Activated naive CD4-positive, alpha-beta T cell treated with anti-CD3 and anti-CD28 coated beads for 36 hours (primary cell): ENCODE measurements at regions of chr1 and their contacts with region 1.

Region 1: GRCh38 chr1:109984456-109985275 is at the start of gene AHCYL1:
- DNase-seq: peak; percentile 100
- H3K4me3 Mint-ChIP-seq: peak within 1 kb of the TSS; percentile 97
- H3K27ac Mint-ChIP-seq: peak within 1 kb of the TSS; percentile 92
- H3K4me1 Mint-ChIP-seq: peaks cover 28% of the 10 kb centered on the region
- H3K27me3 Mint-ChIP-seq: no peaks in the 10 kb centered on the region
- total RNA-seq, gene AHCYL1: 70.0 to 75.1 TPM

Region 2: GRCh38 chr1:109643385-109644230 is 341.1 kb before region 1 on chr1:
- CTCF ChIA-PET with region 1: interaction called, 68 read pairs
- intact Hi-C with region 1: loop called (anchors 1 kb)
- DNase-seq: peak; percentile 94
- H3K4me3 Mint-ChIP-seq: no peak overlapping the region
- H3K27ac Mint-ChIP-seq: no peak overlapping the region
- H3K4me1 Mint-ChIP-seq: peaks cover 5% of the 10 kb centered on the region
- H3K27me3 Mint-ChIP-seq: no peaks in the 10 kb centered on the region

Region 3: GRCh38 chr1:109790735-109791494 is 193.8 kb before region 1 on chr1:
- CTCF ChIA-PET with region 1: interaction called, 622 read pairs
- intact Hi-C with region 1: loop called (anchors 5 kb)
- DNase-seq: peak; percentile 91
- H3K4me3 Mint-ChIP-seq: no peak overlapping the region
- H3K27ac Mint-ChIP-seq: peak overlapping the region; percentile 81
- H3K4me1 Mint-ChIP-seq: peaks cover 57% of the 10 kb centered on the region
- H3K27me3 Mint-ChIP-seq: no peaks in the 10 kb centered on the region

Region 4: DNA sequence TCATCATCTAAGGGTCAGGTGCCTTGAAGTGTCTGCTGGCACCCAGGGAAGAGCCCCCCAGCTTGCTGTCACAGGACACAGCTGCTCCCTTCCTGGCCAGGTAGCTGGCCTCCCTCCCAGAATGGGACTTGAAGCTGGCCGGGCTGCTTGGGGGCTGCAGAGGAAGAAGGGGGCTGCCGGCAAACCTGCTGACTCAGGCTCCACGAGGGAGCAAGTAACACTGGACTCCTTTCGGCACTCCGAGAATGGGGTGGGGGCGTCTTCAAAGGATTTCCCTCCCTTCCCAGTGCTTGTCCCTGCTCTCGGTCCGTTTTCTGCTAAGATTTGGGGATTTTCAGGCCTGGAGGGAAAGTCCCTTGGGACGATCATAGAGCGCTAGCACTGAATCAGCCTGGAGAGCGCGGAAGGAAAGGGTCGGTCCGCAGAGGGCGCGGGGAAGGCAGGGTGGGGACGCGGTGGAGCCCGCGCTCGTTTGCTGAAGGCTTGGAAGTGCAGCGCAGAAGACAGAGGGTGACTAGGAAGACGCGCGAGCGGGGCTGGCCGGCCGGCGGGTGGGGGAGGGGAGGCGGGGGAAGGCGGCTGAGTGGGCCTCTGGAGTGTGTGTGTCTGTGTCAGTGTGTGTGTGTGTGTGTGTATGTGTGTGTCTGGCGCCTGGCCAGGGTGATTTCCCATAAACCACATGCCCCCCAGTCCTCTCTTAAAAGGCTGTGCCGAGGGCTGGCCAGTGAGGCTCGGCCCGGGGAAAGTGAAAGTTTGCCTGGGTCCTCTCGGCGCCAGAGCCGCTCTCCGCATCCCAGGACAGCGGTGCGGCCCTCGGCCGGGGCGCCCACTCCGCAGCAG is 74.3 kb before region 1 on chr1 and contains the start of gene CSF1:
- CTCF ChIA-PET with region 1: interaction called, 13 read pairs
- intact Hi-C with region 1: loop called (anchors 2 kb)
- DNase-seq: peak; percentile 69
- H3K4me3 Mint-ChIP-seq: peak within 1 kb of the TSS; percentile 82
- H3K27ac Mint-ChIP-seq: peak within 1 kb of the TSS; percentile 81
- H3K4me1 Mint-ChIP-seq: peaks cover 53% of the 10 kb centered on the region
- H3K27me3 Mint-ChIP-seq: no peaks in the 10 kb centered on the region
- total RNA-seq, gene CSF1: 12.0 to 13.5 TPM

Region 5: DNA sequence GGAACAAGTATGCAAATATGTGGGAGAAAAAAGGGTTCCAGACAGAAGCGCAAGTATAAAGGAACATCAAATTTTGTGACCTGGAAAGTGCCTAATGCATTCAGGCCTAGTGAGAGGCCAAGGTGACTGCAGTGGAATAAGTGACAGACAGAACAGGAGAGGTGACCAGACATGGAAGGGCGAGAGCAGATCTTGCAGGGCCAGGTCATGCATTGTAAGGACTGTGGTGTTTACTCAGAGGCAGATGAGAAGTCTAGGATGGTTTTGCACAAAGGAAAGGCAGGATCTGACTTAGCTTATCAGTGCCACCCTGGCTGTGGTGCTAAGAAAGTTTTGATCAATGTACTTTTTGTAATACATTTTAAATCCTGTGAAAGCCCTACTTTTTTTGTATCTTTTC is 34.2 kb before region 1 on chr1:
- CTCF ChIA-PET with region 1: no interaction called
- intact Hi-C with region 1: no loop called
- DNase-seq: no peak
- H3K4me3 Mint-ChIP-seq: no peak overlapping the region
- H3K27ac Mint-ChIP-seq: no peak overlapping the region
- H3K4me1 Mint-ChIP-seq: peaks cover 4% of the 10 kb centered on the region
- H3K27me3 Mint-ChIP-seq: no peaks in the 10 kb centered on the region

Region 6: DNA sequence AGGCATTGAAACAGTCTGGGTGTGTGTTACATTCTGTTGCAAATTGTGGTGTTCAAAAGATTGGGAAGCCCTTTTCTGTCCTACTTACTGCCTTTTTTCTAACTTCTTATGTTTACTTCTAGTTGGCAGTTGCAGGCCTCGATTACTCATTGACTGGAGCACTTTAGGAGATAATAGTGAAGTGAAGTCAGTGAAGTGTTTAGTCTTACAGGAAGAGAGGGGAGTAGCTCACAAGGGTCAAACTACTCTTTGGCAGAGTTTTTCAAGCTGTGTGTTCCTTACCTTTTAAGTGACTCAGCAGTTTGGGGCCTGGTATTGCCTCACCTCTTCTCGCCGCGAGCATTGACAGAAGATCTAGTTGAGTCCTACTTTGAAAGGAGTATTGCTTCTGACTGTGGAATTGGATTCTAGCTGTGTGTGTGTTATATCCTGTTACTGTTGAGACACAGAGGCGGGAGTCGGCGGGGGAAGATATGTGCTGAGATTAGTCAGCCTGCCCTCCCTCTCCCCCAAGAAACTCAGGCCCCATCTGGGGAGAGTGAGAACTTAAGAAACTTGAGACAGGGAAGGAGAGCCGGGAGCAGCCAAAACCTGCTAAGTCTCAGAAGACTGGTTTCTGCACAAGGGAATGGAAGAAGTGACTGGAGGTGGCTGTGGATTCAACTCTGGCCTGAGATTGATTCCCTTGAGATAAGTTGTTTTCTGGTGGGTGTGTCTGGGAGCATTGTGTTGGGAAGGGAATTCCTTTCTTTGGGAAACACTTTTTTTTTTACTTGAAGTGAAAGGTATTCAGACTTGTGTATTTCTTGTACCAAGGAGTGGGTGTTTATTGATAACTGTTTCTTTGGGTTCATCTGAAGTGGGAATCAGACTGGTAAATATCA is 19.3 kb after region 1 on chr1:
- CTCF ChIA-PET with region 1: interaction called, 15 read pairs
- intact Hi-C with region 1: loop called (anchors 1 kb)
- DNase-seq: peak; percentile 80
- H3K4me3 Mint-ChIP-seq: peak overlapping the region; percentile 23
- H3K27ac Mint-ChIP-seq: peak overlapping the region; percentile 83
- H3K4me1 Mint-ChIP-seq: peaks cover 21% of the 10 kb centered on the region
- H3K27me3 Mint-ChIP-seq: no peaks in the 10 kb centered on the region